Mammary epithelial cell (primary cell): ENCODE measurements at regions of chr15 and their contacts with region 1.

Region 1: GRCh38 chr15:73081321-73081958 is 29.2 kb downstream of the NEO1 start:
- DNase-seq: peak; percentile 30
- H3K4me3 ChIP-seq: no peak overlapping the region
- H3K27ac ChIP-seq: no peak overlapping the region
- H3K4me1 ChIP-seq: peaks cover 10% of the 10 kb centered on the region
- H3K27me3 ChIP-seq: no peaks in the 10 kb centered on the region
- CTCF ChIP-seq: peak; percentile 56 to 65

Region 2: DNA sequence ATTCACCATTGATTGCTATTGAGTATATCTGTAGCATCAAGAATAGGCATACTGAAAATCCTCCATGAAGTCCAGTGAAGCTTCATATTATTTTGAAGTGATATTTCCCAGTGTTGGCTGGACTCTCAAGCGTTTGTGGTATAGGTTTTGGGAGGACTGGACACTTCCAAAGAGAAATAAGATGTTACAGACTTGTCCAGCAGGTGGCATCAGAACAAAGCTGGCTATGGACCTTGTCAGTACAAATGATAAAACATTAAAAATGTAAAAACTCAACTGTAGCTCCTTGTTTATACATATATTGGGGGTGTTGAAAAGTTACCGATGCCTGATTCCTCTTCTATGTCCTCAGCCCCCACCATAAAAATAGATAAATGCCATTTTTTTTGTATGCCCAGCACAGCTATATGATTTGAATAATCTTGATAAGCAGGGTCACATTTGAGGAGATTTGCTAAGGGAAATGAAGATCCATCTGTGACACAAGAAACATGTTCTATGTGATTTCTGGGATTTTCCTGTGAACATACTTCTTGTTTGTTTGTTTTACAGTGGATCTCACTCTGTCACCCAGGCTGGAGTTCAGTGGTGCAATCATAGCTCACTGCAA is 481.5 kb before region 1 on chr15:
- CTCF ChIA-PET with region 1: no interaction called
- dilution Hi-C with region 1: no loop called
- in situ Hi-C with region 1: no loop called
- intact Hi-C with region 1: loop called (anchors 2 kb)
- DNase-seq: peak; percentile 34
- H3K4me3 ChIP-seq: no peak overlapping the region
- H3K27ac ChIP-seq: no peak overlapping the region
- H3K4me1 ChIP-seq: no peaks in the 10 kb centered on the region
- H3K27me3 ChIP-seq: no peaks in the 10 kb centered on the region
- CTCF ChIP-seq: peak; percentile 60 to 68

Region 3: DNA sequence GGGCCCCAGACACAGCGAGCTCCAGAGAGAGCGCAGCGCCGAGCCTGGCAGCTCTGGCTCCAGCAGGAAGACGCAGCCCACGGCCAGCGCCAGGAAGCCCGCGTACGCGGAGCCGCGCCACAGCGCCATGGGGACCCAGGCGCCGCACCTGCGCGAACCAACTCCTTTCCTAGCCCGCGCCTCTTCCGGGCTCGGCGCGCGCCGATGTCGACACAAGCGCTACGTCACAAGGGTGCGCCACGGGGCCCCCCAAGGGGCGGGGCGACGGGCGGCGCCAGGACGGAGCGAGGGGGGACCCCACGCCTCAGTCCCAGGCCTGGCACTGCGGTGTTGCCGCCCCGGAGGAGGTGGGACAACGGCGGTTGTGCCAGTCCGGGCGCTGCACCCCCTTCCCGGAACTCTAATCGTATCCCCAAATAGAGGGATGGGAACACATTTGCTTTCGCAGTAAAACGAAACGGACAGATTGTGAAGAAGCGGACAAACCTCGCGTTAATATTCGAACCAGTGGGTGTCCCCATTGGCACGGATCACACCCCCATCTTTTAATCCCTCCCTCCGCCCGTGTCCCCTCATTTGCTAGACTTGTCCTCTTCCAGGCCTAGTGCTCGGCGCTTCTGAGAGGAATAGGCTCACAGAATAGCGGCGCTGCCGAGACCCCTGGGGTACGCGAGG is 297.7 kb before region 1 on chr15 and contains the start of gene ADPGK:
- CTCF ChIA-PET with region 1: no interaction called
- dilution Hi-C with region 1: no loop called
- in situ Hi-C with region 1: loop called in 1 of 2 experiments (anchors 5 kb)
- intact Hi-C with region 1: loop called (anchors 1 kb)
- DNase-seq: peak; percentile 95
- H3K4me3 ChIP-seq: peak within 1 kb of the TSS; percentile 94 to 97 (median 95)
- H3K27ac ChIP-seq: peak within 1 kb of the TSS; percentile 82
- H3K4me1 ChIP-seq: peaks cover 16% of the 10 kb centered on the region
- H3K27me3 ChIP-seq: no peaks in the 10 kb centered on the region
- CTCF ChIP-seq: no peak
- total RNA-seq, gene ADPGK: 39.7 to 46.9 TPM

Region 4: DNA sequence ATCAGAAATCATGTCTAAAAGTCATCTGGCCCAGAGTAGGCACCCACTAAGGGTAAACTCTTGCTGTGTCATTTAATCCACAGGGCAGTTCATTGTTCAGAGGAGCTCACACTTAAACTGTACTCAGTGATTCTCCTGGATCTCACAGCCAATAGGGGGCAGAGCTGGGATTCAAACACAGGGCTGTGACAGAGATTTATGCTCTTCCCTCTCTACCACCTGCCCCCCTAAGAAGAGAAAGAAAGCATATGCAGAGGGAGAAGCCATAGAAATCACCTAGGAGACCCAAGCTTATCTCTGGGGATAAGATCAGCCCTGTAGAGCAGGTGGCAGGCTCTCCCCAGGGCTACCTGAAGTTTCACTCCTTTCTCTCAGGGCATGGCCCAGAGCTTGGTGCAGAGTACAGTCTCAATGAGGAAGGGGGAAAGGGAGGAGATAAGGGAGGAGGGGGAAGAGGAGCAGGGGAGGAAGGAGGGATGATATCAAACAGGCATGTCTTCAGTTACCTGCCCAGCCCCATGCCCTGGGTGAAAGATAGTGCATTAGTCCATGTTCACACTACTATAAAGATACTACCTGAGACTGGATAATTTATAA is 246.0 kb before region 1 on chr15:
- CTCF ChIA-PET with region 1: interaction called, 3 read pairs
- dilution Hi-C with region 1: no loop called
- in situ Hi-C with region 1: no loop called
- intact Hi-C with region 1: loop called (anchors 1 kb)
- DNase-seq: no peak
- H3K4me3 ChIP-seq: no peak overlapping the region
- H3K27ac ChIP-seq: no peak overlapping the region
- H3K4me1 ChIP-seq: no peaks in the 10 kb centered on the region
- H3K27me3 ChIP-seq: peaks cover 2% of the 10 kb centered on the region
- CTCF ChIP-seq: peak; percentile 26 to 55

Region 5: DNA sequence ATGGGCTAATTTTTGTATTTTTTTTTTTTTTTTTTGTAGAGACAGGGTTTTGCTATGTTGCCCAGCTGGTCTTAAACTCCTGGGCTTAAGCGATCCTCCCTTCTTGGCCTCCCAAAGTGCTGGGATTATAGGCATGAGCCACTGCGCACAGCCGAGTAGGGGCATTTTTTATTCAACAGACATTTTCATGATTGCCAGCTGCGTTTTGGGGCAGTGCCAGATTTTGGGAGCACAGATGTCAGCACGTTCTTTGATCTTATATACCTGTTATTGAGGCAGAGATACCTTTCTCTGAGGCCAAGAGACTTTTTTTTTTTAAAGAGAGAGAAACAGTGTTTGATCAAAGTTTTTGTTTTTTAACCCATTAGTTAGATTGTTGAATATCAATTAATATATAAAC is 12.3 kb before region 1 on chr15:
- CTCF ChIA-PET with region 1: interaction called, 12 read pairs
- dilution Hi-C with region 1: no loop called
- in situ Hi-C with region 1: no loop called
- intact Hi-C with region 1: no loop called
- DNase-seq: no peak
- H3K4me3 ChIP-seq: no peak overlapping the region
- H3K27ac ChIP-seq: no peak overlapping the region
- H3K4me1 ChIP-seq: no peaks in the 10 kb centered on the region
- H3K27me3 ChIP-seq: no peaks in the 10 kb centered on the region
- CTCF ChIP-seq: no peak